AG04450 (cell line): ENCODE measurements at regions of chr10 and their contacts with region 1.

Region 1: GRCh38 chr10:114876602-114877300 is 55.2 kb downstream of the FHIP2A start:
- DNase-seq: no peak
- H3K4me3 ChIP-seq: no peak overlapping the region
- H3K27ac ChIP-seq: no peak overlapping the region
- H3K27me3 ChIP-seq: no peaks in the 10 kb centered on the region
- CTCF ChIP-seq: peak; percentile 88

Region 2: GRCh38 chr10:114780610-114781184 is 96.1 kb before region 1 on chr10:
- CTCF ChIA-PET with region 1: no interaction called
- POLR2A ChIA-PET with region 1: no interaction called
- DNase-seq: no peak
- H3K4me3 ChIP-seq: no peak overlapping the region
- H3K27ac ChIP-seq: no peak overlapping the region
- H3K27me3 ChIP-seq: no peaks in the 10 kb centered on the region
- CTCF ChIP-seq: no peak

Region 3: DNA sequence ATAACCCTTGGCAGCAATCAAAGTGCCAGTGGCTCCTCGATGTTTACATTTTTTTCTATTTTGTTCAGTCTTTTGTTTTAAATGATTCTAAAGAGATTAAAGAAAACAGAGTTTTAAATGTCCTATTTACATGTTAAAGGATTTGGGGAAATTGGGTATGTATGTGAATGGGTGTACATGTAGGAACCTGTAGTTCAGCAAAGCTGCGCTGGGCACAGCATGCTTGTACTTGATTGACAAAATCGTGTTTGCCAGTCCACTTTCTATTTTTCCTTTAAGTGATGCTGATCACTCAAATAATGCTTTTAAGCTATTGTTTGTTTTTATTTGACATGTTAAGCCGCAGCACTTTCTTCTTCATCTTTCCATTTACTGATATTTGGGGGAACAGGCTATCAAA is 14.3 kb before region 1 on chr10:
- CTCF ChIA-PET with region 1: interaction called, 42 read pairs
- POLR2A ChIA-PET with region 1: no interaction called
- DNase-seq: no peak
- H3K4me3 ChIP-seq: no peak overlapping the region
- H3K27ac ChIP-seq: no peak overlapping the region
- H3K27me3 ChIP-seq: no peaks in the 10 kb centered on the region
- CTCF ChIP-seq: no peak

Region 4: GRCh38 chr10:114893251-114893650 is 16.5 kb after region 1 on chr10:
- CTCF ChIA-PET with region 1: interaction called, 17 read pairs
- POLR2A ChIA-PET with region 1: no interaction called
- DNase-seq: no peak
- H3K4me3 ChIP-seq: no peak overlapping the region
- H3K27ac ChIP-seq: no peak overlapping the region
- H3K27me3 ChIP-seq: no peaks in the 10 kb centered on the region
- CTCF ChIP-seq: no peak

Region 5: DNA sequence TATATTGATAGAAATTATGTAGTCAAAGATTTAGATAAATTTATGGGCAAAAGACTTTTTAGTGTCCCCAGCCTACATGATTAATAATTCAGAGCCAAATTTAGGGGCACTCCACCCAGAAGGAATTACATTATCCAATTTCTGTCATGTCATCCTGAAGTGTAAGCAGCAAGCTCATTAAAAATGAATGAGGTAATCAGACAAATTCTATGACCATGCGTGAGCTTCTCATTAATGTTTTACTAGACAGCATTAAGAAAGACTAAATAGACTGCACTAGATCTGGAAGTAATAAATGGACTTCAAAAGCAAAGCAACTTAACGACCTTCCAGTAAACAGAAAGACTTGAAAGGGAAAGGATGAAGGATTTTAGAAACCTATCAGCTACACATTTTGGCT is 38.5 kb after region 1 on chr10:
- CTCF ChIA-PET with region 1: interaction called, 14 read pairs
- POLR2A ChIA-PET with region 1: no interaction called
- DNase-seq: no peak
- H3K4me3 ChIP-seq: no peak overlapping the region
- H3K27ac ChIP-seq: no peak overlapping the region
- H3K27me3 ChIP-seq: no peaks in the 10 kb centered on the region
- CTCF ChIP-seq: no peak

Region 6: GRCh38 chr10:114937962-114938855 is 61.5 kb after region 1 on chr10 and contains the start of gene TRUB1:
- CTCF ChIA-PET with region 1: interaction called, 13 read pairs
- POLR2A ChIA-PET with region 1: no interaction called
- DNase-seq: peak; percentile 89
- H3K4me3 ChIP-seq: peak within 1 kb of the TSS; percentile 91
- H3K27ac ChIP-seq: peak within 1 kb of the TSS; percentile 65
- H3K27me3 ChIP-seq: no peaks in the 10 kb centered on the region
- CTCF ChIP-seq: no peak
- polyA plus RNA-seq, gene TRUB1: 13.7 and 21.0 TPM in 2 replicates

Region 7: DNA sequence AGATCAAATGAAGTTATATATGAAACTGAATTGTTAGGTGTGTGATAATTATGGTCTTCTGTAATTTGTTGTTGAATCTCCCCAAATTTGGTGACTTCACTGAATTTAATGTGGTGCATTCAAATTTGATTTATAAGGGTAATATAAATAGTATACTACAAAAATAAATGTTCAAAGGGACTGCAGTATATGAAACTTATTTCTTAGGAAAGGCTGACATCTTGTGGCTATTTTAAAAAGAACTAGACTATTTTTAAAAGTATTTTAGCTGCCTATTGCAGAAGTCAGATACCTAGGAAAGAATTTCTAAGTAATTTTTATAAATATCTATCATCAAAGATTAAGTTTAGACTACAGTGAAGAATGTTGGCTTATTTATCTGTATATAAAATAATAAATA is 253.0 kb after region 1 on chr10:
- CTCF ChIA-PET with region 1: interaction called, 130 read pairs
- POLR2A ChIA-PET with region 1: no interaction called
- DNase-seq: peak; percentile 0
- H3K4me3 ChIP-seq: no peak overlapping the region
- H3K27ac ChIP-seq: no peak overlapping the region
- H3K27me3 ChIP-seq: no peaks in the 10 kb centered on the region
- CTCF ChIP-seq: peak; percentile 18; the same call in 1 of the 2 replicates

Region 8: DNA sequence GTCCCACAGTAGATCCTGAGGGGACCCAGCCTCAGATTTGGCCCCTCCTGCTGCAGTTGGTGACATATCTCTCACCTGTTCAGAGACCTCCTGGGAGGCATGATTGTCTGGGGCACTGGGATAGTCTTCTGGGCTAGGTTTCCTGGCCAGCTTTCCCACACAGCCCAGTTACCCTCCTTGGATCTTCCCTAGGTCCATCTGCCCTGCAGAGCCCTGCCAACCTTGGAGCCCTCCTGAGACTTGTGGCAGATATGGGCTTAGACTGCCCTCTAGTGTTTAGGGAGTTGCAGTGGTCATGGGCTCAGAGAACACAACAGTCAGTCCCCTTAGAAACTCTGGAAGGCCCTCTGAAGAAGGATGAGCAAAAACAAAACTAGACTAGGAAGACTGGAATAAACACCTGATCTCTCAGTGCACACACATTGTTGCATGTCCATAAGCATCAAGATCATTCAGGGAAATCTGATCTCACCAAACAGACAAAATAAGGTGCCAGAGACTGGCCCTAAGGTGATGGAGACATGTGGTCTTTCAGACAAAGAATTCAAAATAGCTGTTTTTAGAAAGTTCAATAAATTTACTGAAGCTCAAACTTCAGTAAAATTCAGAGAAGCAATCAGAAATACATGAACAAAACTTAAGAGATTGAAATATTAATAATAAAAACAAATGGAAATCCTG is 541.0 kb after region 1 on chr10:
- CTCF ChIA-PET with region 1: interaction called, 10 read pairs
- POLR2A ChIA-PET with region 1: no interaction called
- DNase-seq: peak; percentile 6
- H3K4me3 ChIP-seq: no peak overlapping the region
- H3K27ac ChIP-seq: no peak overlapping the region
- H3K27me3 ChIP-seq: no peaks in the 10 kb centered on the region
- CTCF ChIP-seq: peak; percentile 78